Endothelial cell of umbilical vein (primary cell): ENCODE measurements at regions of chr22 and their contacts with region 1.

Region 1: DNA sequence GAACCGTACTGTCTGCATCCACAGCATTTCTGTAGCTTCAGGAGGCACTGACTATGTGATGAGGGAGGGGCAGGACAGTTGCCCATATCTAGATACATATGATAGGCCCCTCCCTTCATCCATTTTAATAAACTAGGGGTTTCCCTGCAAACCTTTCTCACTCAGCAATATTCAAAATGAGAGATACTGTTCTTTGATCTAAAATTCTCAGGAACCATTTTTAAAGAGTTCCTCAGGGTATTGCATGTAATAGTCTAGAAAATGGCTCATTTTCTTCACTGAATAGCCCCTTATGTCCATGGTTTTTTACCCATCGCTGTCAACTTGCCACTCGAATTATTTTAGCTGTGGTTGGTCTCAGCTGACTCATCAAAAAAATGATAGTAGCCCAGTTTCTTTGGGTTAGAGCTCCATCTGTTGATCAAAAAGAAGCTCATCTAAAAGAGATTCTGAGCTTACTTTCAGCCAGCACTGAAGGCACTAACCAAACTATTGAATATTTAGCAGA is 37.0 kb upstream of the DNAJB7 start:
- DNase-seq: peak; percentile 55
- H3K4me3 ChIP-seq: no peak overlapping the region
- H3K27ac ChIP-seq: no peak overlapping the region
- H3K4me1 ChIP-seq: no peaks in the 10 kb centered on the region
- H3K27me3 ChIP-seq: no peaks in the 10 kb centered on the region
- CTCF ChIP-seq: peak; percentile 33 to 44
- POLR2A ChIP-seq: no peak

Region 2: DNA sequence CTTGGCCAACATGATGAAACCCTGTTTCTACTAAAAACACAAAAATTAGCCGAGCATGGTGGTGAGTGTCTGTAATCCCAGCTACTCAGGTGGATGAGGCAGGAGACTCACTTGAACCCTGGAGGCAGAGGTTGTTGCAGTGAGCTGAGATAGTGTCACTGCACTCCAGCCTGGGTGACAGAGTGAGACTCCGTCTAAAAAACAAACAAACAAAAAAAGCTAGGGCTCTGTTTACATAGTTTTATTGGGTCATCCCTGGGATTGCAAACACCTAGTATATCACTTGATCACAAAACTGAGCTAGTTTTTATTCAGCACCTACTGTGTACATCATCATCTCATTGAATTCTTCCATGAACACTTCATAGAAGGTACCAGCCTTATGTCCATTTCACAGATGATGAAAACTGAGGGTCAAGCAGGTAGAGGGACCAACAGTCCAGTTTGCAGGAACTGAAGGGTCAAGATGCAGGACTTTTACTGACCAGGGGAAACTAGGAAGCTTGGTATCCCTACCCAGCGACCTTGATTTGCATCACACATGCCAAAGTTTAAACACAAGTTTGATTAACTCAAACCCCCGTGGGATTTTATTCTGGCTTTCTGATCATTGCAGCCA is 253.2 kb before region 1 on chr22:
- CTCF ChIA-PET with region 1: interaction called, 20 read pairs
- POLR2A ChIA-PET with region 1: no interaction called
- dilution Hi-C with region 1: no loop called
- intact Hi-C with region 1: loop called (anchors 1 kb)
- DNase-seq: no peak
- H3K4me3 ChIP-seq: no peak overlapping the region
- H3K27ac ChIP-seq: no peak overlapping the region
- H3K4me1 ChIP-seq: peaks cover 6% of the 10 kb centered on the region
- H3K27me3 ChIP-seq: no peaks in the 10 kb centered on the region
- CTCF ChIP-seq: no peak
- POLR2A ChIP-seq: no peak

Region 3: DNA sequence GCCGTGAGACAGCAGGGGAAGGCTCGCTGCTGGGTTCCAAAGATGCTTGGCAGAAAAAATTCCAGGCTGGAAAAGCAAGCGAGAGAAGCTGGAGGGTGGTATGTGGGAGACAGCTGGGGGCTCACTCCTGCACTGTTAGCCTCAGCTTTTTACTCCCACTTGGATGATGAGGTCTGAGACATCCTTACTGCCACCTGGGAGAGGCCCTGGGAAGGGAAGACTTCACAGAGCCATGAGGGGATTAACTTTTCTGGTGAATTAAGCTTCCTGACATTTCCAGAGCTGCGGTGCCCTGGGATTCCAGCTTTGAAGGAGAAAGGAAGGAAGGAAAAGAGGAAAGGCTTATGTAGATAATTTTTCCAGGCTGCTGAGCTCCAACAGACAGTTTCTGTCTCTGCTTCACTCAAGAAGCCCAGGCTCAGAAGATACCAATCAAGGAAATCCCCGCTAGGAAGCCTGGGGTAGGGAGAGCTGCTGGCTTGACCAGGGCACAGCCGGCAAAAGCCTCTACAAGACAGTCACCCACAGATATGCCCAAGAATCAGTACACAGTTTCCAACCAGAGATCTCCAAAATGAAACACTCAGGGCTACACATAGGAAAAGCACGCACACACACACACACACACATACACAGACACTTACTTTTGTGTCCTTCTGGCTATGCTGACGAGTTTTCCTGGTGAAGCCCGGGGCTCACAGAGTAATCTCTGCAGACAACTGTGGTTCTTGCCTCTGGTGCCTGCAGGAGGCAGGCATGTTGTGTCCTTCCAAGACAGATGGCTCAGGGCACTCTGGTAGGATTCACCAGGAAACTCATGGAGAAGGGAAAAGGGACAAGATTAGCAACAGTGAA is 218.7 kb before region 1 on chr22:
- CTCF ChIA-PET with region 1: interaction called, 43 read pairs
- POLR2A ChIA-PET with region 1: no interaction called
- dilution Hi-C with region 1: no loop called
- intact Hi-C with region 1: loop called (anchors 1 kb)
- DNase-seq: peak; percentile 38
- H3K4me3 ChIP-seq: no peak overlapping the region
- H3K27ac ChIP-seq: no peak overlapping the region
- H3K4me1 ChIP-seq: peaks cover 7% of the 10 kb centered on the region
- H3K27me3 ChIP-seq: peaks cover 19 to 20% of the 10 kb centered on the region in 2 experiments
- CTCF ChIP-seq: peak in 1 of 2 donors; percentile 7
- POLR2A ChIP-seq: no peak

Region 4: DNA sequence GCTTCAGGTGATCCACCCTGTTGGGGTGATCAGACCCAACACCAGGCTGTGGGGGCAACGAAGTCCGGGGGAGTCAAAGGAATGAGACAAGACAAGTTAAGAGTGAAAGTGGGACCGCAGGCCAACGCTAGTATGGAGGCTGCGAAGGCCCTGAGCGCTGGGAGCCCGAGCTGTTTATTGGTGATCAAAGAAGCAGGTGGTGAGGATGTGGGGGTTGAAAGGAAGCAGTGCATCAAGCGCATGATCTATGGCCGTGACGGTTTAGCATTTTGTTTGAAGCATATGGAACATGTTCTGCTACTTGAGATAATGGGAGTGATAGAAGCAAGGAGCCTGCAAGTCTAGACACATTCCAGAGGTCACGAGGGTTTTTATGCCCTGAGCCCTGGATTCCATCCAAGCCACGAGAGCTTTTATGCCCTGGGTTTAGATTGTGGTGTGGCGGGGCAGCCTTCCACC is 170.1 kb before region 1 on chr22:
- CTCF ChIA-PET with region 1: no interaction called
- POLR2A ChIA-PET with region 1: no interaction called
- dilution Hi-C with region 1: no loop called
- intact Hi-C with region 1: no loop called
- DNase-seq: no peak
- H3K4me3 ChIP-seq: no peak overlapping the region
- H3K27ac ChIP-seq: no peak overlapping the region
- H3K4me1 ChIP-seq: no peaks in the 10 kb centered on the region
- H3K27me3 ChIP-seq: no peaks in the 10 kb centered on the region
- CTCF ChIP-seq: no peak
- POLR2A ChIP-seq: no peak

Region 5: GRCh38 chr22:40764763-40765441 is 134.0 kb before region 1 on chr22:
- CTCF ChIA-PET with region 1: interaction called, 20 read pairs
- POLR2A ChIA-PET with region 1: no interaction called
- dilution Hi-C with region 1: no loop called
- intact Hi-C with region 1: no loop called
- DNase-seq: no peak
- H3K4me3 ChIP-seq: no peak overlapping the region
- H3K27ac ChIP-seq: no peak overlapping the region
- H3K4me1 ChIP-seq: no peaks in the 10 kb centered on the region
- H3K27me3 ChIP-seq: no peaks in the 10 kb centered on the region
- CTCF ChIP-seq: no peak
- POLR2A ChIP-seq: no peak